Activated CD4-positive, alpha-beta T cell treated with anti-CD3 and anti-CD28 coated beads for 36 hours (primary cell): ENCODE measurements at regions of chr1 and their contacts with region 1.

Region 1: DNA sequence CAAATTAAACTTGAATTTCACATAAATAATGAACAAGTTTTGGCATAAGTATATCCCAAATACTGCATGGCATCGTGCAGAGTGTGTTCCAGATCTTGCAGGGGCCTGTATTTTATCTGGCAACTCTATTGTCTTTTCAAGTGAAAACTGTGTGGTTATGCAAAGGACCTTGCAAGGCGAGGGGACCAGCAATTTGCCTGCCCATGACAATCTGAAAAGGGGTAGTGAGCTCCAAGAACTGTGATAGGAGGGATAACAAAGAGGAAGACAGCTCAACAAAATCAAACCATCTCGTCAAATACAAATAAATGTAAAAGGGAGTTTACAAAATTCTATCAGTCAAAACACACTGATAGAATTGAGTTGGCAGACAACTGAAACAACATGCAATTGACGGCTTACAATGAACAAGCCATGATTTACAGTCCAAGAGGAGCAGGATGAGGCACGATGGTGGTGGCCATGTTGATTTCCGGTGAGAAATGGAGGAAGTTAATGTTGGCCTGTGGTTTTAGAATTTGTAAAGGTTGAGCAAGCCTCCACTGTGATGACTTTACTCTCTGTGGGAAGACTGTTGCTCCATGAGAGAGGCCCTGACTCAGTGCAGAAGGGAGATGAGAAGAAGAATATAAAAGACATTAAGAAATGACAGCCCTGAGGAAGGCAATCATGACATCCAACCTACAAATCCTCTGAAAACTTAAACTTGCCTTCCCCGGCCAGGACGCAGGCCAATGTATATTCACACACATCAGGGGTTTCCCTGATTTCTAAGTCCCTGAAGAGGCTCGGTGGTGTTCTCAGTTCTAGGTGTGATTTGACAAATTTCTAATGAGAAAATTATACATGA is 132.2 kb downstream of the ADSS2 start:
- DNase-seq: peak; percentile 78
- ATAC-seq: peak; percentile 94
- H3K4me3 Mint-ChIP-seq: peak overlapping the region; percentile 31
- H3K27ac Mint-ChIP-seq: peak overlapping the region; percentile 66
- H3K4me1 Mint-ChIP-seq: peaks cover 25% of the 10 kb centered on the region
- H3K27me3 Mint-ChIP-seq: no peaks in the 10 kb centered on the region

Region 2: DNA sequence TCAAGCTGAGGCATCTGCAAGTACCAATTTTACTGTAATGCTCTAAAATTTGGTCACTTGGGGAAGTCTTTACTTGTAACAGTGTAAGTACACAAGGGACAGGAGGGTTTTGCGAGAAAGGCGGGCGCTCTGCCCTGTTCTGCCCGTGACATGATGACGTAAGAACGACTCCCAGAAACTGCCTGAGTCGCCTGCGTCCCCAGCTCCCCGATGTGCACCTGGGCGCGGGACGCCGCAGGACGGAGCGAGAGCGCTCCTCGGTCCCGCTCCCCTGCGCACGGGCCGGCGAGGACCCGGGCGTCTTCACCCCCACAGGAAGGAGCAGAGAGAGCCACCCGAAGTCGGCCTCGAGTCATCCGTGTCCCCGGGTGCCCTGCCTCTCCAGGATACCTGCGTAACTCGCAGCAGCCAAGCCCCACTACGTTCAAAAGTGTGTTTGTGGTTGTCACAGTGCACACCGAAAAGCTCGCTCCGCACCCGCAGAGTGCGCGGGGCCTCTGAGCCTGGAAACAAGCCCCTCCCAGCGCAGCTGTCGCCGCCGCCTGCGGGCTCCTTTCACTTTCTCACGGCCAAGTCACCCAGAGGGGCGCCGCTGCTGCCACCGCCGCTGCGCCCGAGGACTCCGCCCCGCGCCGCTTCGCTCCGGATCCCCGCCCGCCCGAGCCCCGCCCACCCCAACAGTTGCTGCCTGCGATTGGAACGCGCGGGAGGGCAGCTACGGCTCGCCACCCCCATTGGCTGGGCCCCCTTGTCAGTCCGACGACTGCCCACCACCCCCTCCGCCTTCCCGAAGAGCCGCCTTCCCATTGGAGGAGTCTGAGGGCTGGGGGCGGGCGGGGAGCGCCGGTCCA is 271.7 kb before region 1 on chr1:
- CTCF ChIA-PET with region 1: no interaction called
- POLR2A ChIA-PET with region 1: no interaction called
- intact Hi-C with region 1: loop called in 1 of 2 experiments (anchors 1 kb)
- DNase-seq: peak; percentile 98
- ATAC-seq: peak; percentile 92
- H3K4me3 Mint-ChIP-seq: peak overlapping the region; percentile 93
- H3K27ac Mint-ChIP-seq: peak overlapping the region; percentile 97
- H3K4me1 Mint-ChIP-seq: peaks cover 35% of the 10 kb centered on the region
- H3K27me3 Mint-ChIP-seq: no peaks in the 10 kb centered on the region

Region 3: GRCh38 chr1:244353551-244354091 is 34.1 kb after region 1 on chr1:
- CTCF ChIA-PET with region 1: no interaction called
- POLR2A ChIA-PET with region 1: no interaction called
- intact Hi-C with region 1: loop called in 1 of 2 experiments (anchors 2 kb)
- DNase-seq: peak; percentile 55
- ATAC-seq: peak; percentile 63
- H3K4me3 Mint-ChIP-seq: no peak overlapping the region
- H3K27ac Mint-ChIP-seq: peak overlapping the region; percentile 37
- H3K4me1 Mint-ChIP-seq: peaks cover 28% of the 10 kb centered on the region
- H3K27me3 Mint-ChIP-seq: no peaks in the 10 kb centered on the region

Region 4: DNA sequence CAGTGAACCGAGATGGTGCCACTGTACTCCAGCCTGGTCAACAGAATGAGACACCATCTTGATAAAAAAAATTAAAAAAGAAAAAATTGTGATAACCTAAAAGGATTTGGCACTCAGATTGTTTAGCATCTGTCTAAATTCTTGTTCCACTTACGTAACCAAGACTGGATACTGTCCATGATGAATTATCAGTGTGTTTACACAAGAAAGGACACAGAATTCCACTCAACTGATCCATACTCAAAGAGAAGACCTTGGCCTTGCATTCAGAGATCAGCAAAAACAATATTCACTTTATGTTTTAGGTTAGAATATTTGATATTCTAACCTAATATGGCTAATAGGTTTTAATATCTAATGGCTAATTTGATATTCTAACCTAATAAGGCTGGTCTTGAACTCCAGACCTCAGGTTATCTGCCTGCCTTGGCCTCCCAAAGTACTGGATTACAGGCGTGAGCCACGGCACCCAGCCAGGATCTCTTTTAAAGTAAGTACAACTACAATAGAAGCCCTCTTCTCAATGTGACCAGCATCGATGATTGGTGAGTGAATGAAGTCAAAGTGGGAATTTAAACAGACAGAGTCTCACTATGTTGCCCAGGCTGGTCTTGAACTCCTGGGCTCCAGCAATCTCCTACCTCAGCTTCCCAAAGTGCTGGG is 472.8 kb after region 1 on chr1:
- CTCF ChIA-PET with region 1: no interaction called
- POLR2A ChIA-PET with region 1: no interaction called
- intact Hi-C with region 1: no loop called
- DNase-seq: no peak
- ATAC-seq: no peak
- H3K4me3 Mint-ChIP-seq: no peak overlapping the region
- H3K27ac Mint-ChIP-seq: no peak overlapping the region
- H3K4me1 Mint-ChIP-seq: no peaks in the 10 kb centered on the region
- H3K27me3 Mint-ChIP-seq: no peaks in the 10 kb centered on the region